HCT116 (cell line): ENCODE measurements at regions of chr4 and their contacts with region 1.

Region 1: GRCh38 chr4:52369649-52370048 is 289.5 kb downstream of the USP46 start:
- DNase-seq: no peak
- ATAC-seq: no peak
- H3K4me3 ChIP-seq: no peak overlapping the region
- H3K27ac ChIP-seq: no peak overlapping the region
- H3K4me1 ChIP-seq: no peaks in the 10 kb centered on the region
- H3K27me3 ChIP-seq: peaks cover 4% of the 10 kb centered on the region
- CTCF ChIP-seq: no peak
- POLR2A ChIP-seq: no peak
- RAD21 ChIP-seq: no peak

Region 2: DNA sequence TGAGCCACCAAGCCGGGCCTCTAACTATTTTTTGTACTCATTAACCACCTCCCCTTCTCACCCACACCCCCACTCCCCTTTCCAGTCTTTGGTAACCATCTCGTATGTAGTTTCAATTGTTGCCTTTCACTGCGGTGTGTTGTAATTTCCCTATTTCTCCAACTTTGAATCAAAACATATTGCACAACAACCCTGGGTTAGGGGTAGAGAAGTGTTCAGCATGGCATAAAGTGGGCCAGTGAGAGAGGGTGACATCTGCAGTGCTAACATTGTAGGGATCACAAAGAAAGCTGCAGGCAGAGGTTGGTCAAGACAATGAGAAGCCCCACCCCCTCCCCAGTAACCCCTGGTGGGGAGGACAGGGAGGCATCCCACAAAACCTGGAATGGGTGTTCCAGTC is 225.8 kb before region 1 on chr4:
- CTCF ChIA-PET with region 1: no interaction called
- POLR2A ChIA-PET with region 1: no interaction called
- RAD21 ChIA-PET with region 1: no interaction called
- intact Hi-C with region 1: no loop called
- DNase-seq: no peak
- ATAC-seq: no peak
- H3K4me3 ChIP-seq: no peak overlapping the region
- H3K27ac ChIP-seq: no peak overlapping the region
- H3K4me1 ChIP-seq: no peaks in the 10 kb centered on the region
- H3K27me3 ChIP-seq: 0 out of 2 replicates have a peak, but pooled peaks cover 3% of the 10 kb centered on the region
- CTCF ChIP-seq: no peak
- POLR2A ChIP-seq: no peak
- RAD21 ChIP-seq: no peak

Region 3: DNA sequence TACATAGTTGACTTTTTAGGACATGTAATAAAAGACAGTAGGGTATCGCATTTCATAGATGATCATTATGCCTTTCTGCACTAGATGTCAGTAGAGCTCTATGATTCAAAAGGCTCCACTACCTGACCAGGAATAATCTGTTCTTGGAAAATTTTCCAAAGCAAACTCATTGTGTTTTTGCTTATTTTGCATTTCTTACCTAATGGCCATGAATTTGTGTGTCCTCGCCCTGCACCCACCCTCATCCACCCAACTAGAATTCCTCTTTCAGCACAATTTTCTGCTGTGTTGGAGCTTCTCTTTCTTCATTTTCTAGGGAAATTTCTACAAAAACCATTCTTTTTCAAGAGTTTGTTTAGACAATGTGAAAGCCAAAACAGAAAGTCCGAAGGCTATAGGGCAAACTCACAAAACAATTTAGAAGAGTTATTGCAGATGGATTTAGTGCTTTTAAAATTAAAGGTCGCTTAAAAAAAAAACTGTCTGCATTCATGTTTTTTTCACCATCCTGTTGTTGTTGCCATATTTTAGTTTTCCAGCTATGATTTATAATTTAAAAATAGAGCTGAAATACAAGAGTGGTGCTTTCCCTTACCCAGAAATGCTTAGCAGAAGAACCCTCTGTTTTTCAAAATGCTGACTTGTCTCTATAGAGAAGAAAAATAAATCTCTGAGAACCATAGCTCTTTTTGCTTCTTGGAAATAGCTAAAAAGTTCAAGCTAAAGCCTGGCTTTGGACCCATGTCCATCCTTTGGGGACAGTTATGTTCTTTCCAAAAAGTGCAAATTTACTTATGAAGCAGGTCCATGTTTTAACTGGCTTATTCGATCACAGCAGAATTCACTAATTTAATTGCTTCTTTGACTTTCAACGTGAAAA is 134.8 kb before region 1 on chr4:
- CTCF ChIA-PET with region 1: no interaction called
- POLR2A ChIA-PET with region 1: no interaction called
- RAD21 ChIA-PET with region 1: no interaction called
- intact Hi-C with region 1: loop called (anchors 5 kb)
- DNase-seq: peak; percentile 41
- ATAC-seq: peak; percentile 89
- H3K4me3 ChIP-seq: no peak overlapping the region
- H3K27ac ChIP-seq: no peak overlapping the region
- H3K4me1 ChIP-seq: peaks cover 0 to 2% of the 10 kb centered on the region in 2 experiments; a peak in 1 of 4 replicates
- H3K27me3 ChIP-seq: peaks cover 19% of the 10 kb centered on the region
- CTCF ChIP-seq: peak; percentile 35 to 66 (median 51); a peak in 4 of 6 replicates
- POLR2A ChIP-seq: no peak
- RAD21 ChIP-seq: peak; percentile 79